A549 (cell line): ENCODE measurements at regions of chr11 and their contacts with region 1.

Region 1: GRCh38 chr11:7533199-7534041 is 19.6 kb downstream of the PPFIBP2 start:
- DNase-seq: no peak
- ATAC-seq: no peak
- H3K4me3 ChIP-seq: no peak overlapping the region
- H3K27ac ChIP-seq: no peak overlapping the region
- H3K4me1 ChIP-seq: no peaks in the 10 kb centered on the region
- CTCF ChIP-seq: no peak
- EP300 ChIP-seq: no peak
- POLR2A ChIP-seq: no peak
- RAD21 ChIP-seq: no peak

Region 2: GRCh38 chr11:7520981-7521487 is 12.4 kb before region 1 on chr11:
- CTCF ChIA-PET with region 1: interaction called, 11 read pairs
- POLR2A ChIA-PET with region 1: no interaction called
- DNase-seq: no peak
- ATAC-seq: no peak
- H3K4me3 ChIP-seq: no peak overlapping the region
- H3K27ac ChIP-seq: no peak overlapping the region
- H3K4me1 ChIP-seq: no peaks in the 10 kb centered on the region
- CTCF ChIP-seq: no peak
- EP300 ChIP-seq: no peak
- POLR2A ChIP-seq: no peak
- RAD21 ChIP-seq: no peak

Region 3: GRCh38 chr11:7591987-7592386 is 58.6 kb after region 1 on chr11:
- CTCF ChIA-PET with region 1: no interaction called
- POLR2A ChIA-PET with region 1: no interaction called
- DNase-seq: no peak
- ATAC-seq: no peak
- H3K4me3 ChIP-seq: no peak overlapping the region
- H3K27ac ChIP-seq: no peak overlapping the region
- H3K4me1 ChIP-seq: peaks cover 16% of the 10 kb centered on the region; the same call in 2 of the 3 replicates
- CTCF ChIP-seq: no peak
- EP300 ChIP-seq: no peak
- POLR2A ChIP-seq: no peak
- RAD21 ChIP-seq: no peak